ENCODE measurements at regions of chr6 and their contacts with region 1.

Region 1: DNA sequence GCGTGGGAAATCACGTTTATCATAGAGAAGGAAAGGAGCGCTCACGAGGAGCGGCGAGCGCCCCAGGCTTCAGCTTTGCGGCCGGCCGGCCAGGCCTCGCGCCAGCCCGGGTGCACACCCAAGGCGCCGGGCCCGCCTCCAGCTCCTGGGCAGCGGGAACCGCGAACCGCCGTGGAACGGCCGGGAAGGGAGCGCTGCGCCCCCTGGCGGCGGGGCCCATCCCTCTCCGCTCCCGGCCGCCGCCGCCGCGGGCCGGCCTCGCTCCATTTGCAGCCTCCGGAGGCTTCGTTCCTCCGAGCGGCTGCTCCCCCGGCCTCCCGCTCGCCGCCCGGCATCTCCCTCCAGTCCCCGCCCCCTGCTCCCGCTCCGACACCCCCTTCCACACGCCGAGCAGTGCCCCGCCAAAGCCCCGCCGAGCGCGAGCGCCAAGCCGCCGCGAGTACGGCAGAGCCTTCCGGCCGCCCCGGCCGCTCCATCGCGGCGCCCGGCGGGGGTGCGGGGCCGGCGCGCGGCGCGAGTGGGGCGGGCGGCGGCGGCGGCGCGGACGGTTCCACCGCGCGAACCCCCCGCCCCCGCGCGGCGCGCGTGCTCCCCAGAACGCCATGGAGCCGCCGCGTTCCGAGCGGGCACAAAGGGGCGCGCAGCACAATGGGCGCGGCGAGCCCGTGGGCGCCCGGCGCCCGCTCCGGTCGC is 956 bp downstream of the BEND3 start:
- DNase-seq: no peak
- ATAC-seq: peak; percentile 88
- H3K4me3 ChIP-seq: peak overlapping the region; percentile 57; the same call in 1 of the 2 replicates
- H3K27ac ChIP-seq: no peak overlapping the region; the same call in 1 of the 2 replicates
- H3K4me1 ChIP-seq: peaks cover 12% of the 10 kb centered on the region
- H3K27me3 ChIP-seq: no peaks in the 10 kb centered on the region; a peak in 1 of 4 replicates
- CTCF ChIP-seq: peak; percentile 65 to 84 (median 78); a peak in 5 of 6 replicates
- EP300 ChIP-seq: no peak
- POLR2A ChIP-seq: peak; percentile 69
- RAD21 ChIP-seq: peak; percentile 60

Region 2: DNA sequence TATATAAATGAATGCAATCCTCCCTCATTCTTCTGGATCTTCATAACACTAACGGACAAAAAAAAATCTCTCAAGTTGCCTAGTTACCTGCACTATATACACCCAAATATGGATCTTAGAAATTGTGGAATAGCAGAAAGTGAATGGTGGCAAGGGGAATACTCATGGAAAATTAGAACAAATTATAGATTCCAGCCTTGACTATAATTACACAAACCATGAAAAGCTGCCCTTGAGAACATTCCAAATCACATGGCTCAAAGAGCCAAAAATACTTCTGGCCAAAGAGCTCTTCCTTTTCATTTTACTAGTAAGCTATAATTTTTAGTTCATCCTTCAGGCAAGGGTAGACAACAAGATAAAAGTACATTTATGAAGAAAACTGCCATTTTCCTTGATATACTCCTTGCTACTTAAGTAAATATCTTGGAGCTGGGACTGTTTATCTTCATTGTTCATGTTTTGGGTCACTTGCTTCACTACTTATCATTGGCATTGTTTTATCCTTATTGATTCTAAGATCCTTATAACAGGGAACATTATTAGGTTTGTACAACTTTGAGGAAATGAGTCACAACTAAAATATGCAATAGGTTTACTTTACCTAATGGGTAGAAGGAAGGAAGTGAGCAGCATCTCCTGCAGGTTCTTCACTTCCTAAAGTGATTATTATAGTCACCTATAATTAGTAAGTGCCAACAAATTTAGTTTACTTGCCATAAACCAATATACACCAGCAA is 92.7 kb before region 1 on chr6:
- CTCF ChIA-PET with region 1: no interaction called
- POLR2A ChIA-PET with region 1: no interaction called
- RAD21 ChIA-PET with region 1: no interaction called
- SMC1A ChIA-PET with region 1: no interaction called
- in situ Hi-C with region 1: no loop called
- intact Hi-C with region 1: loop called (anchors 1 kb)
- DNase-seq: no peak
- ATAC-seq: no peak
- H3K4me3 ChIP-seq: no peak overlapping the region
- H3K27ac ChIP-seq: no peak overlapping the region
- H3K4me1 ChIP-seq: no peaks in the 10 kb centered on the region
- H3K27me3 ChIP-seq: no peaks in the 10 kb centered on the region
- CTCF ChIP-seq: no peak
- EP300 ChIP-seq: no peak
- POLR2A ChIP-seq: no peak
- RAD21 ChIP-seq: no peak

Region 3: GRCh38 chr6:107026965-107027364 is 87.4 kb before region 1 on chr6:
- CTCF ChIA-PET with region 1: interaction called, 10 read pairs
- POLR2A ChIA-PET with region 1: no interaction called
- RAD21 ChIA-PET with region 1: interaction called, 9 read pairs
- SMC1A ChIA-PET with region 1: interaction called, 7 read pairs
- in situ Hi-C with region 1: no loop called
- intact Hi-C with region 1: loop called (anchors 1 kb)
- DNase-seq: no peak
- ATAC-seq: no peak
- H3K4me3 ChIP-seq: no peak overlapping the region
- H3K27ac ChIP-seq: no peak overlapping the region
- H3K4me1 ChIP-seq: no peaks in the 10 kb centered on the region
- H3K27me3 ChIP-seq: no peaks in the 10 kb centered on the region
- CTCF ChIP-seq: no peak
- EP300 ChIP-seq: no peak
- POLR2A ChIP-seq: no peak
- RAD21 ChIP-seq: no peak

Region 4: GRCh38 chr6:107033126-107033525 is 81.2 kb before region 1 on chr6:
- CTCF ChIA-PET with region 1: interaction called, 10 read pairs
- POLR2A ChIA-PET with region 1: no interaction called
- RAD21 ChIA-PET with region 1: interaction called, 9 read pairs
- SMC1A ChIA-PET with region 1: interaction called, 7 read pairs
- in situ Hi-C with region 1: no loop called
- intact Hi-C with region 1: loop called (anchors 1 kb)
- DNase-seq: no peak
- ATAC-seq: no peak
- H3K4me3 ChIP-seq: no peak overlapping the region
- H3K27ac ChIP-seq: no peak overlapping the region
- H3K4me1 ChIP-seq: no peaks in the 10 kb centered on the region
- H3K27me3 ChIP-seq: no peaks in the 10 kb centered on the region
- CTCF ChIP-seq: no peak
- EP300 ChIP-seq: no peak
- POLR2A ChIP-seq: no peak
- RAD21 ChIP-seq: no peak

Region 5: GRCh38 chr6:107075951-107076381 is 38.4 kb before region 1 on chr6:
- CTCF ChIA-PET with region 1: interaction called, 23 read pairs
- POLR2A ChIA-PET with region 1: no interaction called
- RAD21 ChIA-PET with region 1: interaction called, 4 read pairs
- SMC1A ChIA-PET with region 1: interaction called, 10 read pairs
- in situ Hi-C with region 1: no loop called
- intact Hi-C with region 1: loop called (anchors 2 kb)
- DNase-seq: no peak
- ATAC-seq: peak; percentile 50
- H3K4me3 ChIP-seq: no peak overlapping the region
- H3K27ac ChIP-seq: no peak overlapping the region
- H3K4me1 ChIP-seq: no peaks in the 10 kb centered on the region
- H3K27me3 ChIP-seq: no peaks in the 10 kb centered on the region
- CTCF ChIP-seq: peak; percentile 16 to 30 (median 18); a peak in 3 of 6 replicates
- EP300 ChIP-seq: no peak
- POLR2A ChIP-seq: no peak
- RAD21 ChIP-seq: peak; percentile 58

Region 6: DNA sequence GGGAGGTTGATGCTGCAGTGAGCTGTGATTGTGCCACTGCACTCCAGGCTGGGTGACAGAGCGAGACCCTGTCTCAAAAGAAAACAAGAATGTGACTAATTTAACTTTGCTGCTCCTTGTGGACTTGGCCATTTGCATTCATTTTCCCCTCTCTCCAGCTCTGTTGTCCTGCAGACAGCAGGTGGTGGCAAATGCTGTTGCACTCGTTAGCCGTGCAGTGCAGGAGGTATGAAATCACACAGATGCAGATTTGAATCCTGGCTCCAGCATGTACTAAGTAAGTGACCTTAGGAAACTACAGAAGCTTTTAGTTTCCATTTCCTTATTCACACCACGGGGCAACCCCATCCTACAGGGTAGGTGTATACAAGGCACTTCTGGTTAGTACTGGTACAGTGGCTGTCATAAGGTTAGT is 10.6 kb after region 1 on chr6:
- CTCF ChIA-PET with region 1: interaction called, 6 read pairs
- POLR2A ChIA-PET with region 1: no interaction called
- RAD21 ChIA-PET with region 1: interaction called, 11 read pairs
- SMC1A ChIA-PET with region 1: interaction called, 5 read pairs
- in situ Hi-C with region 1: no loop called
- intact Hi-C with region 1: no loop called
- DNase-seq: peak; percentile 40
- ATAC-seq: peak; percentile 91
- H3K4me3 ChIP-seq: no peak overlapping the region
- H3K27ac ChIP-seq: no peak overlapping the region
- H3K4me1 ChIP-seq: peaks cover 13% of the 10 kb centered on the region
- H3K27me3 ChIP-seq: no peaks in the 10 kb centered on the region
- CTCF ChIP-seq: peak in 1 of 3 experiments; percentile 13; a peak in 1 of 6 replicates
- EP300 ChIP-seq: no peak
- POLR2A ChIP-seq: no peak
- RAD21 ChIP-seq: peak; percentile 27; the same call in 1 of the 2 replicates